Activated CD4-positive, alpha-beta memory T cell treated with anti-CD3 and anti-CD28 coated beads for 36 hours (primary cell): ENCODE measurements at regions of chr17 and their contacts with region 1.

Region 1: DNA sequence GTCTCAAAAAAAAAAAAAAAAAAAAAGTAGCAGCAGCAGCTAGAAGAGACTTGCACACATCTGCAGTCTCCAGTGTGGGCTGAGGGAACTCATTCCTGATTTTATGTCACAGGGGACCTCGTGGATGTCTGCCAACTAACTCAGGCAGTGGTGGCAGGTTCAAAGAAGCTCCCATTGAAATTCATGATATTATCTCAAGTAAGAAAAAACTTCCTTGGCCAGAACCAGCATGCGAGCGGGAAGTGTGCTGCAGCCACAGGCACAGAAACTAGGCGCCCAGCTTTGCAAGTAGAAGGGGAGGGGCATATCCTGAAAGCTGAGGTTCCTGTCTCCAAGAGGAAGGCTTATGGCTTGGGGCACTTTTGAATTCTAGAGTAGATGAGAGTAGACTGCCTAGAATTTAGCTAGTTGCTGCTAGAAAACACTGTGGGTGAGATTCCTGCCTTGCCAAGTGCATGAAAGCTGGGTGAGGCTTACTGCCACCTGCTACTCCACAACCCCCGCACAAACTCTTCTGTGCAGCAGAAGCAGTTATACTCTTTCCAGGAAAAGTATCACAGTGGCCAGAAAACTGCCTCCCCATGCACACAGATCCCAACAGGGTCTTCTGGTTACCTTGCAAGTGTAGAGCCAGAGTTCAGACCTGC is 603.8 kb upstream of the CA10 start:
- DNase-seq: no peak
- H3K4me3 Mint-ChIP-seq: no peak overlapping the region
- H3K27ac Mint-ChIP-seq: no peak overlapping the region
- H3K4me1 Mint-ChIP-seq: no peaks in the 10 kb centered on the region
- H3K27me3 Mint-ChIP-seq: no peaks in the 10 kb centered on the region

Region 2: GRCh38 chr17:52532373-52532772 is 229.9 kb before region 1 on chr17:
- CTCF ChIA-PET with region 1: no interaction called
- POLR2A ChIA-PET with region 1: no interaction called
- intact Hi-C with region 1: no loop called
- DNase-seq: no peak
- H3K4me3 Mint-ChIP-seq: no peak overlapping the region
- H3K27ac Mint-ChIP-seq: no peak overlapping the region
- H3K4me1 Mint-ChIP-seq: no peaks in the 10 kb centered on the region
- H3K27me3 Mint-ChIP-seq: no peaks in the 10 kb centered on the region

Region 3: GRCh38 chr17:52709724-52710123 is 52.5 kb before region 1 on chr17:
- CTCF ChIA-PET with region 1: no interaction called
- POLR2A ChIA-PET with region 1: no interaction called
- intact Hi-C with region 1: loop called (anchors 10 kb)
- DNase-seq: no peak
- H3K4me3 Mint-ChIP-seq: no peak overlapping the region
- H3K27ac Mint-ChIP-seq: no peak overlapping the region
- H3K4me1 Mint-ChIP-seq: no peaks in the 10 kb centered on the region
- H3K27me3 Mint-ChIP-seq: no peaks in the 10 kb centered on the region

Region 4: GRCh38 chr17:52751051-52751450 is 11.2 kb before region 1 on chr17:
- CTCF ChIA-PET with region 1: no interaction called
- POLR2A ChIA-PET with region 1: no interaction called
- intact Hi-C with region 1: no loop called
- DNase-seq: no peak
- H3K4me3 Mint-ChIP-seq: no peak overlapping the region
- H3K27ac Mint-ChIP-seq: no peak overlapping the region
- H3K4me1 Mint-ChIP-seq: no peaks in the 10 kb centered on the region
- H3K27me3 Mint-ChIP-seq: no peaks in the 10 kb centered on the region